IMR-90 (cell line): ENCODE measurements at regions of chr13 and their contacts with region 1.

Region 1: GRCh38 chr13:113506025-113506685 is 15.6 kb upstream of the DCUN1D2 start:
- DNase-seq: no peak
- ATAC-seq: no peak
- H3K4me3 ChIP-seq: no peak overlapping the region
- H3K27ac ChIP-seq: no peak overlapping the region
- H3K4me1 ChIP-seq: no peaks in the 10 kb centered on the region
- H3K27me3 ChIP-seq: no peaks in the 10 kb centered on the region
- CTCF ChIP-seq: no peak
- POLR2A ChIP-seq: no peak
- RAD21 ChIP-seq: no peak

Region 2: GRCh38 chr13:113466383-113466782 is 39.8 kb before region 1 on chr13:
- CTCF ChIA-PET with region 1: no interaction called
- POLR2A ChIA-PET with region 1: interaction called, 15 read pairs
- dilution Hi-C with region 1: no loop called
- in situ Hi-C with region 1: no loop called
- intact Hi-C with region 1: no loop called
- DNase-seq: peak; percentile 14
- ATAC-seq: peak; percentile 71
- H3K4me3 ChIP-seq: no peak overlapping the region
- H3K27ac ChIP-seq: no peak overlapping the region
- H3K4me1 ChIP-seq: no peaks in the 10 kb centered on the region
- H3K27me3 ChIP-seq: no peaks in the 10 kb centered on the region
- CTCF ChIP-seq: no peak
- POLR2A ChIP-seq: no peak
- RAD21 ChIP-seq: no peak